Naive thymus-derived CD4-positive, alpha-beta T cell (primary cell): ENCODE measurements at regions of chr16 and their contacts with region 1.

Region 1: DNA sequence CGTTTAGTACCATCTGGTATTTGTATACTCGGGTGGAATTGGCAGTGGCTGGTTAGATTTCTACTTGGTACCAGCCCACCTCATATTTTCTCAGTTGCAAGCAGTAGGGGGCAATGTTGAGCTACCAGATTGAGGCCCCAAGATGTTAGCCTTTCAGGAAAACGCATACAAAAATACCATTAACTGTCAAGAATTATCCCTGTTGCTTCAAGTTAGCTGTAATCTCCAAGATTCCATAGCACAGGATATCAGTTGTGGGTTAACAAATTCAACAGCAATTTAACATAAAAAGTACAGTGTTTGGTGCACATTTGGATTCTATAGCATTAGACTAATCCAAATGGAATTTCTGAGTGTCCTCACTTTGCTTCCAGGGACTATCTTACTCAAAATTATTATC is 188.2 kb downstream of the FTO start:
- DNase-seq: peak in 6 of 9 donors; percentile 20 to 60 (median 42)
- ATAC-seq: peak; percentile 55
- H3K4me3 ChIP-seq: no peak overlapping the region
- H3K4me3 Mint-ChIP-seq: peak overlapping the region in 1 of 10 donors; percentile 40
- H3K27ac ChIP-seq: no peak overlapping the region
- H3K27ac Mint-ChIP-seq: peak overlapping the region in 1 of 9 donors; percentile 75
- H3K4me1 ChIP-seq: no peaks in the 10 kb centered on the region
- H3K4me1 Mint-ChIP-seq: peaks cover 0 to 36% (median 5%) of the 10 kb centered on the region in 7 donors
- H3K27me3 ChIP-seq: no peaks in the 10 kb centered on the region
- H3K27me3 Mint-ChIP-seq: no peaks in the 10 kb centered on the region

Region 2: GRCh38 chr16:53872248-53873221 is 19.6 kb before region 1 on chr16:
- CTCF ChIA-PET with region 1: no interaction called
- POLR2A ChIA-PET with region 1: no interaction called
- intact Hi-C with region 1: no loop called
- DNase-seq: no peak
- ATAC-seq: no peak
- H3K4me3 ChIP-seq: no peak overlapping the region
- H3K4me3 Mint-ChIP-seq: peak overlapping the region in 1 of 10 donors; percentile 7
- H3K27ac ChIP-seq: no peak overlapping the region
- H3K27ac Mint-ChIP-seq: peak overlapping the region in 1 of 9 donors; percentile 16
- H3K4me1 ChIP-seq: no peaks in the 10 kb centered on the region
- H3K4me1 Mint-ChIP-seq: peaks cover 5 to 18% (median 8%) of the 10 kb centered on the region in 7 donors
- H3K27me3 ChIP-seq: no peaks in the 10 kb centered on the region
- H3K27me3 Mint-ChIP-seq: no peaks in the 10 kb centered on the region

Region 3: DNA sequence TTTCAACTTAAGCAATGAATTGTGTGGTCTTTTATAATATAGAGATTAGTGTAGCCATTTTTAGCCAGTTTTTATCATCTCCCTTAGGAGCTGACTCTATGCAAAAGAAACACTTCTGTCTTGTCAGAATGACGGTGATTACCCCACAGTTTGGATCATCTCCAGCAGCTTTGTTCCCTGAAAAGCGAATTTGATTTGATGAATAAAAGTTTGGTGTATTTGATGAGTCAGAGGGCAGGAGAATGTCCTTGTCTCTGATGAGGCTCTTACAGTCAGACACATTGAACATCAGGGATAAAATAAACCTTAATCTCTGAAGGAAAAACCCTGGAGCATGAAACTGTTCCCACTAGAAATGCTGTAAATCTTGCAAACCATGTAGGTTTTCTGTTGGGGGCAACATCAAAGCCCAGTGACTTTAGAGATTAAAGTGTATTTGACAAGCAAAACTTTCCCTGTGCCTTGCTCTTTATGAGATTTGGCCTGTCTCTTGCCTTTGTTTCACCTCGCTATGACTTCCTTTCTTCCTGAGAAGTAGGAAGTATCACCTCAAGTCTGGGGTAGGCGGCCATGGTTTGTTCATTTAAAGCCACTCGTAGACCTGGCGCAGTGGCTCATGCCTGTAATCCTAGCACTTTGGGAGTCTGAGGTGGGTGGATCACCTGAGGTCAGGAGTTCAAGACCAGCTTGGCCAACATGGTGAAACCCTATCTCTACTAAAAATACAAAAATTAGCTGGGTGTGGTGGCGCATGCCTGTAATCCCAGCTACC is 21.1 kb after region 1 on chr16:
- CTCF ChIA-PET with region 1: interaction called, 3 read pairs
- POLR2A ChIA-PET with region 1: no interaction called
- intact Hi-C with region 1: loop called in 1 of 2 experiments (anchors 1 kb)
- DNase-seq: peak in 1 of 9 donors; percentile 25
- ATAC-seq: no peak
- H3K4me3 ChIP-seq: no peak overlapping the region
- H3K4me3 Mint-ChIP-seq: peak overlapping the region in 8 of 10 donors; percentile 0 to 64 (median 38)
- H3K27ac ChIP-seq: no peak overlapping the region
- H3K27ac Mint-ChIP-seq: peak overlapping the region in 6 of 9 donors; percentile 17 to 72 (median 52)
- H3K4me1 ChIP-seq: peaks cover 15 to 33% of the 10 kb centered on the region in 2 donors
- H3K4me1 Mint-ChIP-seq: peaks cover 0 to 49% (median 0%) of the 10 kb centered on the region in 7 donors
- H3K27me3 ChIP-seq: no peaks in the 10 kb centered on the region
- H3K27me3 Mint-ChIP-seq: no peaks in the 10 kb centered on the region

Region 4: GRCh38 chr16:54050166-54050857 is 158.2 kb after region 1 on chr16:
- CTCF ChIA-PET with region 1: no interaction called
- POLR2A ChIA-PET with region 1: no interaction called
- intact Hi-C with region 1: loop called in 1 of 2 experiments (anchors 10 kb)
- DNase-seq: no peak
- ATAC-seq: no peak
- H3K4me3 ChIP-seq: no peak overlapping the region
- H3K4me3 Mint-ChIP-seq: no peak overlapping the region
- H3K27ac ChIP-seq: no peak overlapping the region
- H3K27ac Mint-ChIP-seq: peak overlapping the region in 2 of 9 donors; percentile 6 to 28
- H3K4me1 ChIP-seq: no peaks in the 10 kb centered on the region
- H3K4me1 Mint-ChIP-seq: peaks cover 0 to 26% (median 7%) of the 10 kb centered on the region in 7 donors
- H3K27me3 ChIP-seq: no peaks in the 10 kb centered on the region
- H3K27me3 Mint-ChIP-seq: no peaks in the 10 kb centered on the region

Region 5: GRCh38 chr16:54286090-54286993 is 394.2 kb after region 1 on chr16 and contains the start of gene IRX3:
- CTCF ChIA-PET with region 1: no interaction called
- POLR2A ChIA-PET with region 1: no interaction called
- intact Hi-C with region 1: loop called in 1 of 2 experiments (anchors 1 kb)
- DNase-seq: peak in 1 of 9 donors; percentile 41
- ATAC-seq: no peak
- H3K4me3 ChIP-seq: no peak within 1 kb of the TSS
- H3K4me3 Mint-ChIP-seq: peak within 1 kb of the TSS; percentile 38 to 90 (median 75)
- H3K27ac ChIP-seq: no peak within 1 kb of the TSS
- H3K27ac Mint-ChIP-seq: peak within 1 kb of the TSS in 1 of 9 donors; percentile 71
- H3K4me1 ChIP-seq: no peaks in the 10 kb centered on the region
- H3K4me1 Mint-ChIP-seq: peaks cover 19 to 53% (median 34%) of the 10 kb centered on the region in 7 donors
- H3K27me3 ChIP-seq: no peaks in the 10 kb centered on the region
- H3K27me3 Mint-ChIP-seq: peaks cover 47 to 78% (median 67%) of the 10 kb centered on the region in 5 donors
- total RNA-seq, gene IRX3: 3.2 TPM in 1 of 5 experiments, not detected in the others

Region 6: DNA sequence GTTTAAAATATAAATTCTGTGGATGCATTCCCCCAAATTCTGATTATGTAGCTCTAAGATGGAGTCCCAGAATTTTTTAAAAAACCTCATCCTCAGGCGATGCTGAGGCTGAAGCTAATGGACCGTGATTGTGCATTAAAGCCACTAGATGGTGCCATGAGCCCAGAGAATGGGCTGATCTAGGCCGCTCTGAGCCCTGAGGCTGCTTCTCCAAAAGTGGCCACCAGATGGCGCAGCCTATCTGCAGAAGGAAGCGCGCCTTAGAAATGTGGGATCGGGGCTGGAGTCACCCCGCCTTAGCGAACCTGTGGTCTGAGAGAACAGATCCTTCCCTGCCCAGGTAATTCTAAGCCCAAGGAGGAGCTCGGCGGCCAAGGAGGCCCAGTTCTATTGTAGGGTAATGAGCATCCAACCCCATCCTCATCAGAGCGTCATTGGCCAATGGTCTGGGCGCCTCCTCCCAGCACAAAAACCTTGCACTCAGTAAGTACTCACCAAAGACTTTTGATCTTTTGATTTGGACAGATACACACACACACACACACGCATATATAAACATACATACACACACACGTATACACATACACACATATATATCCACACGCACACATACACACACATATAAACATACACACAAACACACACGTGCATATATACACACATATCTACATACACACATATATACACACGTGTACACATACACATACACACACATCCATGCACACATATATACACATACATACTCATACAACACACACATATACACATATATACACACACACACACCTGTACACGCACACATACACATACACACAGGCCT is 1573.1 kb after region 1 on chr16:
- CTCF ChIA-PET with region 1: no interaction called
- POLR2A ChIA-PET with region 1: no interaction called
- intact Hi-C with region 1: loop called in 1 of 2 experiments (anchors 1 kb)
- DNase-seq: peak; percentile 54 to 86 (median 69)
- ATAC-seq: peak; percentile 97
- H3K4me3 ChIP-seq: no peak overlapping the region
- H3K4me3 Mint-ChIP-seq: no peak overlapping the region
- H3K27ac ChIP-seq: no peak overlapping the region
- H3K27ac Mint-ChIP-seq: no peak overlapping the region
- H3K4me1 ChIP-seq: no peaks in the 10 kb centered on the region
- H3K4me1 Mint-ChIP-seq: peaks cover 0 to 7% (median 0%) of the 10 kb centered on the region in 7 donors
- H3K27me3 ChIP-seq: no peaks in the 10 kb centered on the region
- H3K27me3 Mint-ChIP-seq: peaks cover 0 to 4% (median 0%) of the 10 kb centered on the region in 5 donors